ENCODE measurements at regions of chr1 and their contacts with region 1.

Region 1: GRCh38 chr1:59947047-59947938 is 20.7 kb upstream of the CYP2J2 start:
- ATAC-seq: peak; percentile 84 to 98 (median 92)
- H3K4me3 ChIP-seq: no peak overlapping the region
- H3K27ac ChIP-seq: no peak overlapping the region
- H3K4me1 ChIP-seq: no peaks in the 10 kb centered on the region

Region 2: DNA sequence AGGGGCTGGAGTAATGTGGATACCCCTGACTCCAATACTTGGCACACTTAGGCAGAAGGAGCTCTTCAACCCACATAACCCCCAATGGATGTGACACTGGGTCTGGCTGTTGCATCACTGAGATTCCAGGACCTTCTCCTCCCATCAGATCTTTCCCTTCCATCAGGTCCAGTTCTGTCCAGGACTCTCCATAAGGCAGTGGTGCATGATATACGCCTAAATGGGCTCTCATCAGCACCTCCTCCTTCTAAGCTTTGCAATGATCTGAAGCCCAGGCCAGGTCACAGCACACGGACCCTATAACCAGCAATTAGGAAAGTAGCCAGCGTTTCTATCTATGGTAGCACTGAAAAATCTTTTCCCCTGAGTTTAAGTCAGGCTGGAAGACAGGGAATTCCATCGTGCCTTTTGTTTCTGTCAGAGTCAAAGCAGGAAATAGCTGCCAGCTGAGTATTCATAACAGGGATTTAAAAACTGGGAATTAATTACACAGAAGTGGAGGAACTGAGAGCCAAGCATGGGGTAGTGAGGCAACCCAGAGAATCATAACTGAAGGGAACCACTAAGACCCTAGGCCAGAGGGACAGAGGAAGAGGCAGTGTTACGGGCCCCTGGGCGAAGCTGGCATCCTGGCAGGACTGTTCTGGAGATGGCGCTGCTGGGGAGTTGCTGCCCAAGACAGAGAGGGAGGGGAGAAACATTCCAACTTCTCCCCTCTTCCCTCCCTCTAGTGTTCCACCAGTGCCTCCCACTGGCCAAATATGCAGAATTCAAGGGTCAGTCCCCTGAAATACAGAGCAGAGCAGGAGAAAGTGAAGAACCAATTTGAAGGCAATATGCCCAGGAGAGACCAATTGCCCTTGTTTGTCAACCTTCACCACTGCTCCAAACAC is 170.1 kb before region 1 on chr1:
- in situ Hi-C with region 1: loop called in 1 of 9 experiments (anchors 25 kb)
- ATAC-seq: no peak
- H3K4me3 ChIP-seq: no peak overlapping the region
- H3K27ac ChIP-seq: no peak overlapping the region
- H3K4me1 ChIP-seq: peaks cover 0 to 8% of the 10 kb centered on the region in 2 donors